ENCODE measurements at regions of chr1 and their contacts with region 1.

Region 1: DNA sequence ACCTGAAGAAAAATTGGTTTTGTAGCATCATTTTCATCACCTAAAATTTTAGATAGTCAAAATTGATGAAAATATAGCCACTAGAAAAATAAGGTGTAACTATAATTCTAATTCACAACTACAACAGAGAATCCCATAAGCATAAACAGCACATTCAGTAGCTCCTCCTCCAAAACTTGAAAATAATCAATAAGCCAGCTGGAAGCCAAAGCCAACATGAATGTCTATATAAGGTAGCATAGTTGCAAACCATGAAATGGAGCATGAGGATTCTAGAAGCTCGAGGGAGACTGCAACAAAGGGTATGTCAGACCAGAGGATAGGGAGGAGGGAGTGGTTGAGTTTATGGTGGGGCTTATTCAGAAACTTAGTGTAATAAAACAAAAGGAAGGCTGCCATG is 22.4 kb downstream of the ACBD3 start:
- DNase-seq: no peak
- H3K27ac ChIP-seq: no peak overlapping the region
- CTCF ChIP-seq: no peak

Region 2: GRCh38 chr1:226149806-226150205 is 14.3 kb before region 1 on chr1:
- CTCF ChIA-PET with region 1: interaction called, 5 read pairs
- POLR2A ChIA-PET with region 1: interaction called, 10 read pairs
- DNase-seq: no peak
- H3K27ac ChIP-seq: no peak overlapping the region
- CTCF ChIP-seq: no peak